PC-9 (cell line): ENCODE measurements at regions of chr17 and their contacts with region 1.

Region 1: GRCh38 chr17:49227436-49228261 is 2.9 kb downstream of the PHOSPHO1 start:
- DNase-seq: peak; percentile 56 to 69
- H3K4me3 ChIP-seq: no peak overlapping the region
- H3K27ac ChIP-seq: no peak overlapping the region
- H3K4me1 ChIP-seq: peaks cover 13% of the 10 kb centered on the region
- H3K27me3 ChIP-seq: peaks cover 29% of the 10 kb centered on the region; the same call in 1 of the 2 replicates
- CTCF ChIP-seq: peak; percentile 94

Region 2: GRCh38 chr17:49180303-49180702 is 47.3 kb before region 1 on chr17:
- CTCF ChIA-PET with region 1: no interaction called
- POLR2A ChIA-PET with region 1: no interaction called
- intact Hi-C with region 1: loop called (anchors 1 kb)
- DNase-seq: peak in 1 of 2 experiments; percentile 62
- H3K4me3 ChIP-seq: no peak overlapping the region
- H3K27ac ChIP-seq: no peak overlapping the region
- H3K4me1 ChIP-seq: no peaks in the 10 kb centered on the region
- H3K27me3 ChIP-seq: peaks cover 16% of the 10 kb centered on the region; the same call in 1 of the 2 replicates
- CTCF ChIP-seq: peak; percentile 87

Region 3: GRCh38 chr17:49191917-49192741 is 35.5 kb before region 1 on chr17:
- CTCF ChIA-PET with region 1: interaction called, 7 read pairs
- POLR2A ChIA-PET with region 1: interaction called, 3 read pairs
- intact Hi-C with region 1: loop called (anchors 5 kb)
- DNase-seq: peak; percentile 82 to 91
- H3K4me3 ChIP-seq: peak overlapping the region; percentile 74
- H3K27ac ChIP-seq: peak overlapping the region; percentile 87
- H3K4me1 ChIP-seq: peaks cover 12% of the 10 kb centered on the region
- H3K27me3 ChIP-seq: no peaks in the 10 kb centered on the region
- CTCF ChIP-seq: peak; percentile 40; the same call in 1 of the 2 replicates

Region 4: GRCh38 chr17:49290690-49291359 is 63.2 kb after region 1 on chr17:
- CTCF ChIA-PET with region 1: interaction called, 3 read pairs
- POLR2A ChIA-PET with region 1: no interaction called
- intact Hi-C with region 1: loop called (anchors 5 kb)
- DNase-seq: no peak
- H3K4me3 ChIP-seq: no peak overlapping the region
- H3K27ac ChIP-seq: no peak overlapping the region
- H3K4me1 ChIP-seq: no peaks in the 10 kb centered on the region
- H3K27me3 ChIP-seq: no peaks in the 10 kb centered on the region
- CTCF ChIP-seq: peak; percentile 85

Region 5: DNA sequence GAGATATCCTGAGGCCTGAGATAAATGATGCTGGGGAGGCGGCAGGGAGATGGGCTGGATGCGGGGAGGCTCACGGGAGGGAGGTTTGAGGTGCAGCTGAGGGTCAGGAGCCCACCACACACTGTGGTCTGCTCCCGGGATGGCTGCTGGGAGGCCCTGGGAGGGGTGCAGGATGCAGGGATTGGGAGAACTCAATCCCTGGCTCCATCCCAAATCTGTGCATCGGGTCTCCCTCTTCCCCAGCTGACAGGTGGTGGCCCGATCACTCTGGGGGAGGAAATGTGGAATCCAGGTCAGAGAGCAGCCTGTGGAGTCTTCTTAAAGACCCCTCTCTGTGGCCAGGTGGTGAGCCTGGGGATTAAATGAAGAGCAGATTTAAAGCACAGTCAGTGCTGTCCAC is 175.1 kb after region 1 on chr17:
- CTCF ChIA-PET with region 1: interaction called, 4 read pairs
- POLR2A ChIA-PET with region 1: no interaction called
- intact Hi-C with region 1: loop called (anchors 5 kb)
- DNase-seq: no peak
- H3K4me3 ChIP-seq: no peak overlapping the region
- H3K27ac ChIP-seq: no peak overlapping the region
- H3K4me1 ChIP-seq: no peaks in the 10 kb centered on the region
- H3K27me3 ChIP-seq: no peaks in the 10 kb centered on the region
- CTCF ChIP-seq: no peak

Region 6: GRCh38 chr17:49822829-49823228 is 595.2 kb after region 1 on chr17:
- CTCF ChIA-PET with region 1: no interaction called
- POLR2A ChIA-PET with region 1: no interaction called
- intact Hi-C with region 1: no loop called
- DNase-seq: no peak
- H3K4me3 ChIP-seq: no peak overlapping the region
- H3K27ac ChIP-seq: no peak overlapping the region
- H3K4me1 ChIP-seq: peaks cover 16% of the 10 kb centered on the region
- H3K27me3 ChIP-seq: no peaks in the 10 kb centered on the region
- CTCF ChIP-seq: no peak